Heart right ventricle (tissue), 16 donors: ENCODE measurements at regions of chr11 and their contacts with region 1.

Region 1: DNA sequence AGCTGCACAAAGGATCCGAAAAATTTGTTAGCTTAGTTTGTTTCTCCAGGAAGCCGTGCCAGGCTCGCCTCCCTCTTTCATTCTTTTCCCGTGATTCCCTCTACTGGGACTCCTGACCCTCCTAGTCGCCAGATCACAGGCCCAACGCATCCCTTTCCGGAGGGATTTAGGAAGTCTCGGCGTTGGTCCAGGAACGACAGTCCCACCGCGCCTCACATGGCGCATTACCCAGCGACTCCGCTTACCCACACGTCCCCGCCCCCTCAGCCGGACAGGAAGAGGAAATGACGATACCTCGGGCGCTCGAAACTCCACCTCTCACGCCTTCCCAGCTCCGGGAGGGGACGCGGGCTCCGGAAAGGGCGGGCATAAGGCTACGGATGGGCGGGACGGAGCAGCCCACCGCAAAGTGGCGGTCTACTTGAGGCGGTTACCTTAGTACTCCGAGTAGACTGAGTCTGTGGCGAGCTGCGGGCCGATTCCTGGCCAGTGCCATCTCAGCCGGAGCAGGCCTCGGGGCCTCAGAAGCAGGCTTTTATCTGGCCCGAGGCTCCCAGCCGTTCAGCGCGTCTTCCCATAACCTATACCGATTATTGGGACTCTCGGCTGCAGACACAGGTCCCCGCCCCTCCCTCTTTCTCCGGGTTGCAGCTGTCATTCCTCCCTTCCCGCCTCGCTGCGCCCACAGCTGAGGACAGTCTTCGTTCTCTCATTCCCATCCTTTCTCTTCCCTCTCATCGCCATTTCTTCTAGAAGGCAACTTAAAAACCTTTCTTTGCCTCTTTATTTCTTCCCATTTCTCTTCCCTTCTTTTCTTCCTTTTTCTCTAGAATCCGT is at the start of gene CCDC15:
- DNase-seq: peak; percentile 97 to 98
- ATAC-seq: peak; percentile 100
- H3K4me3 ChIP-seq: peak within 1 kb of the TSS; percentile 61 to 87 (median 70)
- H3K27ac ChIP-seq: peak within 1 kb of the TSS in 9 of 10 donors; percentile 76 to 91 (median 87)
- H3K4me1 ChIP-seq: peaks cover 2 to 16% (median 10%) of the 10 kb centered on the region in 9 donors
- H3K27me3 ChIP-seq: no peaks in the 10 kb centered on the region
- CTCF ChIP-seq: no peak
- total RNA-seq, gene CCDC15: 0.07 to 0.83 (median 0.20) TPM

Region 2: DNA sequence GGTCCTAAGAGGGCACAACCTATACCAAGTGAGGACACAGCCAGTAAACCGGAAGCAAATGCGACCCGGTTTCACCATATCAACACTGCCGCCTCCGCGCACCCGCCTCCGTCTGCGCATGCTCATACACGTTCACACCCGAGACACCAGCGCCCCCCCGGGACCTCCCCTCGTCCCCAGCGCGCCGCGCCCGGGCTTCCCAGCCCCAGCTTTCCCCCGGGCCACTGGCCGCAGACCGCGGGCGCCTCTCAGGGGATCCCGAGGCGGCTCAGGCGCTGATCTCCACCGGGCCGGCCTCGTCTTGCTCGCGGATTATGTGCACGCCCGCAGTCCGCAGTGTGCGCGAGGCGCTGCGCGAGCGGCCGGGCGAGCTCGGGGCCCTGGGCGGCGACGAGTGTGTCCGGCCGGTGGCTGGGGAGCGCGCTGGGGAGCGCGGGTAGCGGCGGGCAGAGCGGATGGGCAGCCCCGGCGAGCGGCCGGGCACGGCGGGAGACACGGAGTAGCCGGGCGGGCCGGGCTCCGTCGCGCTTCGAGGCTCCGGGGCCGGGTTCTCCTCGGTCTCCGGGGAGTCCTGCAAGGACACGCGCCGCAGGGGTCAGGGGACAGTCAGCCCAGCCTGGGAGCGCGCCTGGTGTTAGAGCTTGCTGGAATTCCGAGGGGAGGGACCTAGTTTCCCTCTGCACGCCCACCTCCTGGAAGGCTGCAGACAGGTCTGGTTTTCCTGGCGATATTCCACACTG is 32.9 kb before region 1 on chr11:
- intact Hi-C with region 1: loop called in 1 of 10 experiments (anchors 1 kb)
- DNase-seq: peak; percentile 86
- ATAC-seq: peak; percentile 82 to 93 (median 84)
- H3K4me3 ChIP-seq: peak overlapping the region; percentile 3 to 59 (median 52)
- H3K27ac ChIP-seq: peak overlapping the region; percentile 58 to 90 (median 82)
- H3K4me1 ChIP-seq: peaks cover 0 to 18% (median 12%) of the 10 kb centered on the region in 9 donors
- H3K27me3 ChIP-seq: peaks cover 0 to 12% (median 0%) of the 10 kb centered on the region in 7 donors
- CTCF ChIP-seq: peak in 4 of 9 donors; percentile 14 to 43 (median 28)

Region 3: GRCh38 chr11:125141686-125142535 is 187.9 kb after region 1 on chr11:
- intact Hi-C with region 1: loop called in 1 of 10 experiments (anchors 5 kb)
- DNase-seq: peak; percentile 15 to 52
- ATAC-seq: peak; percentile 71 to 82 (median 76)
- H3K4me3 ChIP-seq: no peak overlapping the region
- H3K27ac ChIP-seq: no peak overlapping the region
- H3K4me1 ChIP-seq: peaks cover 0 to 8% (median 0%) of the 10 kb centered on the region in 9 donors
- H3K27me3 ChIP-seq: peaks cover 0 to 35% (median 23%) of the 10 kb centered on the region in 7 donors
- CTCF ChIP-seq: peak; percentile 83 to 98 (median 94)

Region 4: DNA sequence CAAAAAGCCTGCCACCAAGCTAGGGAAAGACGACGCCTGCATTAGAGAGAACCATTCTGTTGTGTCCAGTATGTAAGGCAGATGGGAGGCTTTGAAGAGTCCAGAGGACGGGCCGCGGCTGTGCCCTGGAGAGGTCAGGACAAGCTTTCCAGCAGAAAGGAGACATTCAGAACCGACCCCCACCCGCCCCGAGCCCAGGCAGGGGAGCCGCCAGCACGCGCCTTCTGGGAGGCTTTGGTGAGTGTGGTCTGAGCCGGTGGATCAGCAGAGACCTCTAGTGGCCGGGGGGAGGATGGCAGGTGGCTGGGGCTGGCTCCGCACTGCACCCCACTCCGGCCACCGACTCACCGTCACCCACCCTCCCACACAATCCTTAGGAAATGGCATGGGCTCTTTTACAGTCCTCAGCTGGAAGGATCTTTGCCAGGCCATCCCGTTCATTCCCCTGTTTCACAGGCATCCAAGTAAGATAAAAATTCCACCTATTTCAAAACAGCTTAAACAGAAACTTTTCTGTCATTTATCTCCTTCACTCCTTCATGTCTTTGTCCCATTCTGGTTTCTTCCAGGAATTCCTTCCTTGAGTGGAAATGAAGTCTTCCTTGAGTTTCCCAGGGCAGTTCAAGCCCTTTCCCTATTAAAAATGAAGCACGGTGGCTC is 450.9 kb after region 1 on chr11:
- intact Hi-C with region 1: loop called in 1 of 10 experiments (anchors 10 kb)
- DNase-seq: peak; percentile 73 to 77
- ATAC-seq: peak; percentile 89 to 94 (median 91)
- H3K4me3 ChIP-seq: peak overlapping the region in 2 of 10 donors; percentile 2 to 29
- H3K27ac ChIP-seq: no peak overlapping the region
- H3K4me1 ChIP-seq: peaks cover 0 to 31% (median 10%) of the 10 kb centered on the region in 9 donors
- H3K27me3 ChIP-seq: peaks cover 0 to 8% (median 0%) of the 10 kb centered on the region in 7 donors
- CTCF ChIP-seq: peak; percentile 88 to 98 (median 95)

Region 5: GRCh38 chr11:125592305-125593112 is 638.5 kb after region 1 on chr11 and contains the start of gene STT3A:
- intact Hi-C with region 1: loop called in 1 of 10 experiments (anchors 10 kb)
- DNase-seq: peak; percentile 99 to 100
- ATAC-seq: peak; percentile 98 to 100 (median 99)
- H3K4me3 ChIP-seq: peak within 1 kb of the TSS; percentile 65 to 82 (median 72)
- H3K27ac ChIP-seq: peak within 1 kb of the TSS; percentile 83 to 97 (median 94)
- H3K4me1 ChIP-seq: peaks cover 4 to 38% (median 31%) of the 10 kb centered on the region in 9 donors
- H3K27me3 ChIP-seq: no peaks in the 10 kb centered on the region
- CTCF ChIP-seq: no peak
- total RNA-seq, gene STT3A: 52.1 to 83.9 (median 58.5) TPM

Region 6: GRCh38 chr11:125887373-125888324 is 933.7 kb after region 1 on chr11 and contains the start of gene HYLS1:
- intact Hi-C with region 1: loop called in 1 of 10 experiments (anchors 10 kb)
- DNase-seq: peak; percentile 94 to 95
- ATAC-seq: peak; percentile 98 to 100 (median 99)
- H3K4me3 ChIP-seq: peak within 1 kb of the TSS; percentile 57 to 89 (median 81)
- H3K27ac ChIP-seq: peak within 1 kb of the TSS; percentile 91 to 98 (median 94)
- H3K4me1 ChIP-seq: peaks cover 0 to 30% (median 11%) of the 10 kb centered on the region in 9 donors
- H3K27me3 ChIP-seq: no peaks in the 10 kb centered on the region
- CTCF ChIP-seq: peak in 6 of 9 donors; percentile 13 to 60 (median 46)
- total RNA-seq, gene HYLS1: 2.0 to 6.4 (median 3.8) TPM